SK-N-SH (cell line): ENCODE measurements at regions of chr19 and their contacts with region 1.

Region 1: GRCh38 chr19:55301459-55302317 is 17.9 kb downstream of the BRSK1 start:
- DNase-seq: peak; percentile 99
- H3K4me3 ChIP-seq: peak overlapping the region in 1 of 2 experiments; percentile 21; a peak in 3 of 4 replicates
- H3K27ac ChIP-seq: peak overlapping the region in 1 of 2 experiments; percentile 41; a peak in 1 of 4 replicates
- H3K4me1 ChIP-seq: peaks cover 0 to 8% of the 10 kb centered on the region in 2 experiments; a peak in 1 of 4 replicates
- H3K27me3 ChIP-seq: no peaks in the 10 kb centered on the region
- CTCF ChIP-seq: peak; percentile 91
- EP300 ChIP-seq: no peak
- RAD21 ChIP-seq: peak; percentile 73

Region 2: DNA sequence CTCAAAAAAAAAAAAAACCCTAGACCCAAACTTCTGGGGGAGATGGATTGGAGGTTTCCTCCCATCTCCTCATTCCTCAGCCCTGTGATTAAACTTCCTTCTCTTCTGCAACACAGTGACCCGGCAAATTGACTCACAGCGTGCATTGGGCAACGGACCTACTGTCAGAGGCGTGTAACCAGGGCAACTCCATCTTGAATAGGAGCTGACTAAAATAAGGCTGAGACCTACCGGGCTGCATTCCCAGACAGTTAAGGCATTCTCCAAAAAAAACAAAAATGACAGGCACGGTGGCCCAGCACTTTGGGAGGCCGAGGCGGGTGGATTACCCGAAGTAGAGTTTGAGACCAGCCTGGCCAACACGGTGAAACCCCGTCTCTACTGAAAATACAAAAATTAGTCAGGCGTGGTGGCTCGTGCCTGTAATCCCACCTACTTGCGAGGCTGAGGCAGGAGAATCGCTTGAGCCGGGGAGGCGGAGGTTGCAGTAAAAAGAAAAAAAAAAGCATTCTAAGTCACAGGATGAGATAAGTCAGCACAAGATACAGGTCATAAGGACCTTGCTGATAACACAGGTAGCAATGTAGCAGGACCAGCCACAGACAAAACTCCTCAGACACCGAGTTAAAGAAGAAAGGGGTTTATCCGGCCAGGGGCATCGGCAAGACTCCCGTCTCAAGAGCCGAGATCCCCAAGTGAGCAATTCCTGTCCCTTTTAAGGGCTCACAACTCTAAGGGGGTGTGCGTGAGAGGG is 348.9 kb before region 1 on chr19:
- CTCF ChIA-PET with region 1: no interaction called
- POLR2A ChIA-PET with region 1: no interaction called
- DNase-seq: no peak
- H3K4me3 ChIP-seq: no peak overlapping the region
- H3K27ac ChIP-seq: no peak overlapping the region
- H3K4me1 ChIP-seq: no peaks in the 10 kb centered on the region
- H3K27me3 ChIP-seq: peaks cover 62% of the 10 kb centered on the region
- CTCF ChIP-seq: no peak
- EP300 ChIP-seq: no peak
- RAD21 ChIP-seq: no peak

Region 3: GRCh38 chr19:55189424-55189823 is 112.3 kb before region 1 on chr19:
- CTCF ChIA-PET with region 1: no interaction called
- POLR2A ChIA-PET with region 1: no interaction called
- DNase-seq: no peak
- H3K4me3 ChIP-seq: no peak overlapping the region
- H3K27ac ChIP-seq: peak overlapping the region in 1 of 2 experiments; percentile 46; a peak in 1 of 4 replicates
- H3K4me1 ChIP-seq: no peaks in the 10 kb centered on the region
- H3K27me3 ChIP-seq: peaks cover 5% of the 10 kb centered on the region; the same call in 1 of the 2 replicates
- CTCF ChIP-seq: no peak
- EP300 ChIP-seq: no peak
- RAD21 ChIP-seq: no peak

Region 4: GRCh38 chr19:55279770-55280643 is 21.7 kb before region 1 on chr19 and contains the start of gene HSPBP1:
- CTCF ChIA-PET with region 1: interaction called, 11 read pairs
- POLR2A ChIA-PET with region 1: no interaction called
- DNase-seq: peak; percentile 92
- H3K4me3 ChIP-seq: peak within 1 kb of the TSS; percentile 76 to 94
- H3K27ac ChIP-seq: peak within 1 kb of the TSS; percentile 78 to 81
- H3K4me1 ChIP-seq: peaks cover 0 to 10% of the 10 kb centered on the region in 2 experiments; a peak in 1 of 4 replicates
- H3K27me3 ChIP-seq: no peaks in the 10 kb centered on the region
- CTCF ChIP-seq: no peak
- EP300 ChIP-seq: no peak
- RAD21 ChIP-seq: no peak
- polyA plus RNA-seq, gene HSPBP1: 51.7 and 55.4 TPM in 2 replicates

Region 5: DNA sequence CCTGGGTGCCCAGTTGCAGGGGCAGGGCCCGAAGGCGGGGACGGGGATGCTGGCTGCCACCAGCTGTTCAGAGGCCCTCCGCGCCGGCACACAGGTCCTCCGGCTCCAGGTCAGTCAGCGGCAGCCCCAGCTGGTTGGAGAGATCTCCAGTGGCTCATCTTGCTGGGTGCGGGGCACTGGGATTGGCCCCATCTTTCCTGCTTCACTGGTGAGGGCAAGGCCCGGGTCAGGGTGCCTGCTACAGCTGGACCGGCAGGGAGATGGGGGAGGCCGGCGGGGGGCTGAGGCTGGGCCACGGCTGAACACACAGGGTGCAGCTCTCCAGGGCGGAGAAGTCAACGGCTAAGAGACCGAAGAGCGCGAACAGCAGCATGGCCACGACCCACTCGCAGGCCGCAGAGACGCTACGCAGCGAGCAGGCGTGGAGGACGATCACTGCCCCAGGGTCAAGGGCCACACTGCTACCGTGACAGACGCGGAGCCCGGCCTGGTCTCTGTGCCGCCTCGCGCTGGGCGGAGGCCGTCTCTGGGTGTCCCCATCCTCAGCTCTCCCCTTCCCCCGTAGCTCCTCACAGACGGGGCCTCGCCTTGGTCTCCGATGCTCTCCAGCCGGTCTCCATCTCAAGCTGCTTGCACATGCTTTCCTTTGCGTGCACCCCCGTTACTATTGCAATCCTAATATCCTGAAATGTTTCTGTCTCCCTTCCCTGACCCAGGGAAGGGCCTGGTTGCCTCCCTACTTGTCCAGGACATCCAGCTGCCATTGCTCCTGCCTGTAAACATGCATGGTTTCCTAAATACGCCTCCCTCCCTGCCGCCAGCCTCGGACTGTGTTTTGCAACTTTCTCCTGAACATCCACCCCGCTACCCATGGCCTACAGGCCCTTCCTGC is 11.2 kb after region 1 on chr19:
- CTCF ChIA-PET with region 1: interaction called, 46 read pairs
- POLR2A ChIA-PET with region 1: interaction called, 4 read pairs
- DNase-seq: peak; percentile 30
- H3K4me3 ChIP-seq: no peak overlapping the region
- H3K27ac ChIP-seq: no peak overlapping the region
- H3K4me1 ChIP-seq: no peaks in the 10 kb centered on the region
- H3K27me3 ChIP-seq: no peaks in the 10 kb centered on the region
- CTCF ChIP-seq: no peak
- EP300 ChIP-seq: no peak
- RAD21 ChIP-seq: no peak

Region 6: GRCh38 chr19:55325172-55325571 is 23.5 kb after region 1 on chr19 and contains the start of gene TMEM150B:
- CTCF ChIA-PET with region 1: interaction called, 21 read pairs
- POLR2A ChIA-PET with region 1: interaction called, 8 read pairs
- DNase-seq: no peak
- H3K4me3 ChIP-seq: no peak within 1 kb of the TSS
- H3K27ac ChIP-seq: no peak within 1 kb of the TSS
- H3K4me1 ChIP-seq: no peaks in the 10 kb centered on the region
- H3K27me3 ChIP-seq: no peaks in the 10 kb centered on the region
- CTCF ChIP-seq: no peak
- EP300 ChIP-seq: no peak
- RAD21 ChIP-seq: no peak
- polyA plus RNA-seq, gene TMEM150B: not detected in 2 replicates

Region 7: DNA sequence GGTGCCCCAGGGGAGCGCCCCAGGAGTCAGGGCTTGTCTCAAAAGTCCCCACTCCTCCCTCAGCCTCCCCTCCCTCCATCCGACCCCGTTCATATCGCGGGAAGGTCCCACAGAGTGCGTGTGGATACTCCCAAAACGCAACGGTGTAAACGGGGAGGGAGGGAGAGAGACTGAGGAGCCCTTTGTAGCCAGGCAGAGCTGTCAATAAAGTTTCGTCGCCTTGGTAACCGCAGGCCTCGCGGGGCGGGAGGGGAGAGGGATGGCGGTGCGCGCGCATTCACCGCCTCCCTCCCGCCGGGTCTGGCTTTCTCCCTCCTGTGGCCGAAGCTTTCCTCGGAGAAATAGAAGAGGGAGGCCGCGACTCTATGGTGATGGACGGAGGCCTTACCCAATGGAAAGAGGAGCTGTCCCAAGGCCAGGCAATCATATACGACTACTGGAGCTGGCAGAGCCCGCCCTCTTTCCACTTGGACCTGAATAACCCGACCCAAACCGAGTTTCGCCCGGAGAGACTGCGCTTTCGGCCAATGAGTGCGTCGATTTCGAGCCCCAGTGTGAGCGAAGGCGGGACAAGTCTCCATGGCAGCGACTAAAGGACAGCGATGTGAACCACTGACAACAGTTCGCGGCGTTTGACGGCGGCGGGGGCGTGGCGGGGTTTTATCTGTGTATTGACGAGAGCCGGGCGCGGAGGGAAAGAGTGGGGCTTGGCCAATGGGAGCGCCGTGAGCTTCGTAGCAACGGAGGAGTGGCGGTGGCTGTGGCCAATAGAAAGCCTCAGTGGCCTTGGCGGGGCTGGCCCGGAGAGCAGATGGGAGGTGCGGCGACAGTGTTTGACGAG is 37.6 kb after region 1 on chr19 and contains the start of gene KMT5C:
- CTCF ChIA-PET with region 1: interaction called, 11 read pairs
- POLR2A ChIA-PET with region 1: no interaction called
- DNase-seq: peak; percentile 97
- H3K4me3 ChIP-seq: peak within 1 kb of the TSS; percentile 75
- H3K27ac ChIP-seq: peak within 1 kb of the TSS; percentile 97 to 98
- H3K4me1 ChIP-seq: peaks cover 0 to 29% of the 10 kb centered on the region in 2 experiments; a peak in 2 of 4 replicates
- H3K27me3 ChIP-seq: no peaks in the 10 kb centered on the region
- CTCF ChIP-seq: peak; percentile 33; the same call in 1 of the 2 replicates
- EP300 ChIP-seq: peak in 1 of 2 experiments; percentile 37; a peak in 1 of 4 replicates
- RAD21 ChIP-seq: peak; percentile 8; the same call in 1 of the 2 replicates
- polyA plus RNA-seq, gene KMT5C: 14.0 and 14.4 TPM in 2 replicates

Region 8: GRCh38 chr19:55418185-55418584 is 116.5 kb after region 1 on chr19:
- CTCF ChIA-PET with region 1: interaction called, 17 read pairs
- POLR2A ChIA-PET with region 1: no interaction called
- DNase-seq: peak; percentile 83
- H3K4me3 ChIP-seq: no peak overlapping the region; a peak in 1 of 4 replicates
- H3K27ac ChIP-seq: no peak overlapping the region
- H3K4me1 ChIP-seq: no peaks in the 10 kb centered on the region
- H3K27me3 ChIP-seq: no peaks in the 10 kb centered on the region
- CTCF ChIP-seq: peak; percentile 82
- EP300 ChIP-seq: no peak
- RAD21 ChIP-seq: peak; percentile 93